Mammary epithelial cell (primary cell): ENCODE measurements at regions of chr6 and their contacts with region 1.

Region 1: DNA sequence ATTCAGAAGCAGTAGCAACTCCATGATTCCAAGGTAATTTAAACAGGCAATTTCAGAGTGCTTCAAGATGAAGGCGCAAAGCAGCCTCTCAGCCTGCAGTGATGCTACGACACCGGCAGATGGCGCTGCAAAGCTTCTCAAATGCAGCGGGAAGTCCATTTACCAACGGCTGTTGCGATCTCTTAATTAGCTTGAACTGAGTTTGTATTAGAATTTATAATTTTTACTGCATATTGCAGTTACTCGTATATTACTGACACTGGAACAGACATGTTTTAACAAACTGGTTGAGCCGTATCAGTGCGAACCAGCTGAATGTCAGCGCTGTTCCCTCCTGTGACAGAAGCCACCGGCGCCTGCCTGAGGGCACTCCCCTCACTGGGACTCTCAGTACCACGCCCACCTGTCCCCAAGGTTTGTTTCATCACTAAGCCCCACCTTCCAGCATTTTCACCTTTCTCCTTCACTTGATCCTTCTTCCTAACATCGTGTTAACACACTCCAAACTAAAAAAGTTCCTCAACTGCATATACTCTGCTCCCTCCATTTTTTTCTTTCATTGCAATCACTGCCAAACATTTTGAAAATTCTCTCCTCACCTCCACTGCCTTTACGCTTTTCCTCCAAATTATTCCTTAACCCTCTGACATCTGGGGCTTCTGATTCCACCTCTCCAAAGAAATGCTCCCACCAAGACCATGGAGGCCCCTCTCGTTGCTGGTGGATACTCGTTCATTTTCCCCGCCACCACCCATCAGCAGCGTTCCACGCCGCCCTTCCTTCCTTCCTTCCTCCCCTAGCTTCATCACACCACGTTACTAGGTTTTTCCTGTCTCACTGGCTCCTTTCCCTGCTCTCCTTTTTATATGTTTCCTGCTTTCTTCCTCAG is 14.5 kb downstream of the GNL1 start:
- DNase-seq: peak; percentile 69
- H3K4me3 ChIP-seq: peak overlapping the region; percentile 1 to 32 (median 28)
- H3K27ac ChIP-seq: no peak overlapping the region
- H3K4me1 ChIP-seq: peaks cover 3% of the 10 kb centered on the region
- H3K27me3 ChIP-seq: no peaks in the 10 kb centered on the region
- CTCF ChIP-seq: peak; percentile 98 to 100

Region 2: GRCh38 chr6:30447237-30447636 is 94.5 kb before region 1 on chr6:
- CTCF ChIA-PET with region 1: no interaction called
- dilution Hi-C with region 1: no loop called
- in situ Hi-C with region 1: no loop called
- intact Hi-C with region 1: no loop called
- DNase-seq: no peak
- H3K4me3 ChIP-seq: no peak overlapping the region
- H3K27ac ChIP-seq: no peak overlapping the region
- H3K4me1 ChIP-seq: peaks cover 14% of the 10 kb centered on the region
- H3K27me3 ChIP-seq: peaks cover 22% of the 10 kb centered on the region
- CTCF ChIP-seq: peak; percentile 20 to 27

Region 3: GRCh38 chr6:30463651-30464618 is 77.8 kb before region 1 on chr6:
- CTCF ChIA-PET with region 1: no interaction called
- dilution Hi-C with region 1: loop called (anchors 10 kb)
- in situ Hi-C with region 1: no loop called
- intact Hi-C with region 1: no loop called
- DNase-seq: peak; percentile 55
- H3K4me3 ChIP-seq: no peak overlapping the region
- H3K27ac ChIP-seq: no peak overlapping the region
- H3K4me1 ChIP-seq: peaks cover 19% of the 10 kb centered on the region
- H3K27me3 ChIP-seq: peaks cover 47% of the 10 kb centered on the region
- CTCF ChIP-seq: no peak

Region 4: DNA sequence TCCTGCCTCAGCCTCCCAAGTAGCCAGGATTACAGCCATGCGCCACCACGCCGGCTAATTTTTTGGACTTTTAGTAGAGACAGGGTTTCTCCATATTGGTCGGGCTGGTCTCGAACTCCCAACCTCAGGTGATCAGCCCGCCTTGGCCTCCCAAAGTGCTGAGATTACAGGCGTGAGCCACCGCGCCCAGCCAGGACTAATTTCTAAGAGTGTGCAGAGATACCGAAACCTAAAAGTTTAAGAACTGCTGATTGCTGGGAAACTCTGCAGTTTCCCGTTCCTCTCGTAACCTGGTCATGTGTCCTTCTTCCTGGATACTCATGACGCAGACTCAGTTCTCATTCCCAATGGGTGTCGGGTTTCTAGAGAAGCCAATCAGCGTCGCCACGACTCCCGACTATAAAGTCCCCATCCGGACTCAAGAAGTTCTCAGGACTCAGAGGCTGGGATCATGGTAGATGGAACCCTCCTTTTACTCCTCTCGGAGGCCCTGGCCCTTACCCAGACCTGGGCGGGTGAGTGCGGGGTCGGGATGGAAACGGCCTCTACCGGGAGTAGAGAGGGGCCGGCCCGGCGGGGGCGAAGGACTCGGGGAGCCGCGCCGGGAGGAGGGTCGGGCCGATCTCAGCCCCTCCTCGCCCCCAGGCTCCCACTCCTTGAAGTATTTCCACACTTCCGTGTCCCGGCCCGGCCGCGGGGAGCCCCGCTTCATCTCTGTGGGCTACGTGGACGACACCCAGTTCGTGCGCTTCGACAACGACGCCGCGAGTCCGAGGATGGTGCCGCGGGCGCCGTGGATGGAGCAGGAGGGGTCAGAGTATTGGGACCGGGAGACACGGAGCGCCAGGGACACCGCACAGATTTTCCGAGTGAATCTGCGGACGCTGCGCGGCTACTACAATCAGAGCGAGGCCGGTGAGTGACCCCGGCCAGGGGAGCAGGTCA is 52.4 kb before region 1 on chr6 and contains the start of gene HLA-E:
- CTCF ChIA-PET with region 1: no interaction called
- dilution Hi-C with region 1: loop called (anchors 5 kb)
- in situ Hi-C with region 1: loop called in 1 of 2 experiments (anchors 5 kb)
- intact Hi-C with region 1: no loop called
- DNase-seq: peak; percentile 99
- H3K4me3 ChIP-seq: peak within 1 kb of the TSS; percentile 92 to 99 (median 93)
- H3K27ac ChIP-seq: peak within 1 kb of the TSS; percentile 93
- H3K4me1 ChIP-seq: peaks cover 12% of the 10 kb centered on the region
- H3K27me3 ChIP-seq: no peaks in the 10 kb centered on the region
- CTCF ChIP-seq: no peak
- total RNA-seq, gene HLA-E: 106 to 145 TPM

Region 5: GRCh38 chr6:30600451-30600961 is 58.7 kb after region 1 on chr6:
- CTCF ChIA-PET with region 1: no interaction called
- dilution Hi-C with region 1: loop called (anchors 5 kb)
- in situ Hi-C with region 1: no loop called
- intact Hi-C with region 1: loop called (anchors 1 kb)
- DNase-seq: no peak
- H3K4me3 ChIP-seq: no peak overlapping the region
- H3K27ac ChIP-seq: no peak overlapping the region
- H3K4me1 ChIP-seq: no peaks in the 10 kb centered on the region
- H3K27me3 ChIP-seq: no peaks in the 10 kb centered on the region
- CTCF ChIP-seq: no peak

Region 6: GRCh38 chr6:30664994-30665767 is 123.4 kb after region 1 on chr6:
- CTCF ChIA-PET with region 1: no interaction called
- dilution Hi-C with region 1: loop called (anchors 5 kb)
- in situ Hi-C with region 1: no loop called
- intact Hi-C with region 1: loop called (anchors 5 kb)
- DNase-seq: no peak
- H3K4me3 ChIP-seq: no peak overlapping the region
- H3K27ac ChIP-seq: no peak overlapping the region
- H3K4me1 ChIP-seq: no peaks in the 10 kb centered on the region
- H3K27me3 ChIP-seq: no peaks in the 10 kb centered on the region
- CTCF ChIP-seq: no peak

Region 7: GRCh38 chr6:30717042-30717844 is 175.5 kb after region 1 on chr6 and contains the start of gene MDC1:
- CTCF ChIA-PET with region 1: interaction called, 3 read pairs
- dilution Hi-C with region 1: no loop called
- in situ Hi-C with region 1: no loop called
- intact Hi-C with region 1: loop called (anchors 2 kb)
- DNase-seq: peak; percentile 100
- H3K4me3 ChIP-seq: peak within 1 kb of the TSS; percentile 56 to 69 (median 61)
- H3K27ac ChIP-seq: peak within 1 kb of the TSS; percentile 78
- H3K4me1 ChIP-seq: peaks cover 33% of the 10 kb centered on the region
- H3K27me3 ChIP-seq: no peaks in the 10 kb centered on the region
- CTCF ChIP-seq: peak in 1 of 2 donors; percentile 43
- total RNA-seq, gene MDC1: 12.8 to 36.7 TPM

Region 8: GRCh38 chr6:31087494-31088089 is 545.8 kb after region 1 on chr6:
- CTCF ChIA-PET with region 1: no interaction called
- dilution Hi-C with region 1: no loop called
- in situ Hi-C with region 1: no loop called
- intact Hi-C with region 1: loop called (anchors 1 kb)
- DNase-seq: peak; percentile 73
- H3K4me3 ChIP-seq: no peak overlapping the region
- H3K27ac ChIP-seq: no peak overlapping the region
- H3K4me1 ChIP-seq: peaks cover 8% of the 10 kb centered on the region
- H3K27me3 ChIP-seq: no peaks in the 10 kb centered on the region
- CTCF ChIP-seq: peak; percentile 74